ENCODE measurements at regions of chr20 and their contacts with region 1.

Region 1: DNA sequence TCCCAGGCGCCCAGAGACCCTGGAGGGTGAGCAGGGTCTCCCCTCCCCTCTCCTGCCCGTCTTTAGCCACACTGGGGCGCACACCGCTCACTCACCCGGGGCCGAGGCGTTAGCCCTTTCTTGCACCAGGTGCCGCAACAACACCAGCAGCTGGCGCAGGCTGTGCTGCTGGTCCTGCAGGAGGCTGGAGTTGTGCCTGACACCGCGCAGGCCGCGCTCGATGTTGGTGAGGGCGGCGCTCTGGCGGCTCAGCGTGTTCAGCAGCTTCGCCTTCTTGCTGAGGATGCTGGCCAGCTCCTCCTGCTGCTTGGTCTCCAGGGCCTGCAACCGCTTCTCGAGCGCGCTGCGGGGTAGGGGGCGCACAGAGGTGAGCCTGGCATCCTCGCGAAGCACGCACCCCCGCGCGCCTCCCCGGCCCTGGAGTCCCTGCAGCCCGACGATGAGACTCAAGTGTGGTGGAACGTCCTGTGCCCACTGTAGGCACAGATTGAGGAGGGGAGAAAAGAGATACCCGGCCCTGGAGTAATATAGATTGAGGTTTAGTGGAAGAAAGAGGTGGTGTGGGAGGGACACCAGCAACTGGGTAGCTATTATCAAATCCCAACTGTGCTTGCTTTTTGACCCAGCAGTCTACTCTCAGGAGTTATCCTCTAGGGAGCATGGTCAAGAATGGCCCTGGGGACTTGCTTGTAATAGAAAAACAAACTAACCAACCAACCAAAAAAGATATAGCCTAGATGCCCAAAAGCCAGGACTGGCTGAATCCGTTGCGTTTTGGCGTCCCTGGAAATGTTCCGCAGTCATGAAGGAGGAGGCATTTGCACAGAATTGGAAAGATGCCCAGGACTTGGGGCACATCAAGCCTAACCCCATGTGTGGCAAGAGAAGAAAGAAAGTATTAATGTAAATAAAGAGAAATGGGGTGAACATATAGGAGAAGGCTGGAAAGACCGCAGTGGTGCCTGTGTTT is 30.9 kb downstream of the ANGPT4 start:
- H3K4me3 Mint-ChIP-seq: no peak overlapping the region
- H3K27ac Mint-ChIP-seq: no peak overlapping the region
- H3K4me1 Mint-ChIP-seq: peaks cover 48% of the 10 kb centered on the region
- H3K27me3 Mint-ChIP-seq: peaks cover 37% of the 10 kb centered on the region

Region 2: DNA sequence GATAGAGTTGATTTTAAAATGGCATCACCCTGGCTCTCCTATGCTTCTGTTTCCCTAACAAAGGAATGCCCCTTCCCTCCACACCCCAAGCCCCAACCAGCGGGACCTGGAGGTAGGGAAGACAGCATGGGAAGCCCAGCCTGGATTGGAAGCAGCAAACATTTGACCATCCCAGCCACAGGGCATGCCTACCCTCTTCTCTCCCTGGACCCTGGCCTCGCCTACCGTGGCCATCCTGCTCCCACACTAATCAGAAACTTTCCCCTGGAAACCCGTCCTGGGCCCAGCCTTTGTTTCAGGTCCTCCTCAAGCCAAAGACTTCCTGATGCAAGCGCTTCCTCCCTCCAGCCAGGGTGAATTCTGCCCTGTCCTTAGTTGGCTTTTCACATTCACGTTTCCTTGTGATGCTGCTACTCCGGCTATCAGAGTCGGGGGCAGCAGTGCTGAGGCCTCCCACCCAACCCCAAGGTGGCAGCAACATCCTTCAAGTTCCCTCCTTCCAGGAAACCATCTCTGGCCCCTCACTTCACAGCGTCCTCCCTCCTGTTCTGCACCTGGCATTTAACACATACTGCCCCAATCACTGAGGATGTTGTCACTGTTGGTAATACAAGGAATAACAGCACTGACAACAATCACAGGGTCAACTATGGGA is 49.0 kb after region 1 on chr20:
- intact Hi-C with region 1: no loop called
- H3K4me3 Mint-ChIP-seq: no peak overlapping the region
- H3K27ac Mint-ChIP-seq: no peak overlapping the region
- H3K4me1 Mint-ChIP-seq: peaks cover 7% of the 10 kb centered on the region
- H3K27me3 Mint-ChIP-seq: no peaks in the 10 kb centered on the region

Region 3: DNA sequence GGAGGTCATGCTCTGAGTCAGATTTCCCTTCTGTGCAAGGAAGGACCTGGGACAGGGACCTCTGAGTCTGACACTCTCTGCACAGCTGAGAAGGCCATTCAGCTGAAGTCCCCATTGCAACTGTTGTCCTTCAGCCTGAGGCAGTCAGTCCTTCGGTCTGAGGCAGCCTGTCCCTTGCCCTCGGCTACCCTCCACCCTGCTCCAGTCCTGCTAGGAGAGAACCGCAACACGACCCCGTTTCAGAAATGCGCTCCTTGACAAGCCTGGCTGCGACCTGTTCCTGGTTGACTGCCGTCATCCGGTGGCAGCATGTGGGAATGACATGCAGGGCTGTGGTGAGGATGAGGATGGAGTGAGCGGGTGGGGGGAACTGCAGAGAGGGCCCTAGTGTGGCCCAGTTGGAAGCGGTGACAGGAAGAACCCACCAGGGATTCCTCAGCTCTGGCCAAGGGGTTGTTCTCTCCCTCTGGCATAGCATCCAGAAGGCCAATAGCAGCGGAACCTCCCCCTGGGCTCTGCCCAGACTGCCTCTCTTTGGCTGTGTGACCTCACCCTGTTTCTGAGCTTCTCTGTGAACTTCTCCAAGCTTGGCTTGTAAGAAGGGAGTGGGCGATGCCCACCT is 71.2 kb after region 1 on chr20:
- intact Hi-C with region 1: loop called (anchors 10 kb)
- H3K4me3 Mint-ChIP-seq: no peak overlapping the region
- H3K27ac Mint-ChIP-seq: no peak overlapping the region
- H3K4me1 Mint-ChIP-seq: peaks cover 5% of the 10 kb centered on the region
- H3K27me3 Mint-ChIP-seq: peaks cover 58% of the 10 kb centered on the region

Measured in dendritic cell treated with granulocyte-macrophage colony-stimulating factor and Interleukin-4, amounts not matched to agents 40 ng/mL and 50 ng/mL, for 4 days (primary cell).